Activated CD4-positive, alpha-beta memory T cell treated with anti-CD3 and anti-CD28 coated beads for 36 hours (primary cell): ENCODE measurements at regions of chr21 and their contacts with region 1.

Region 1: DNA sequence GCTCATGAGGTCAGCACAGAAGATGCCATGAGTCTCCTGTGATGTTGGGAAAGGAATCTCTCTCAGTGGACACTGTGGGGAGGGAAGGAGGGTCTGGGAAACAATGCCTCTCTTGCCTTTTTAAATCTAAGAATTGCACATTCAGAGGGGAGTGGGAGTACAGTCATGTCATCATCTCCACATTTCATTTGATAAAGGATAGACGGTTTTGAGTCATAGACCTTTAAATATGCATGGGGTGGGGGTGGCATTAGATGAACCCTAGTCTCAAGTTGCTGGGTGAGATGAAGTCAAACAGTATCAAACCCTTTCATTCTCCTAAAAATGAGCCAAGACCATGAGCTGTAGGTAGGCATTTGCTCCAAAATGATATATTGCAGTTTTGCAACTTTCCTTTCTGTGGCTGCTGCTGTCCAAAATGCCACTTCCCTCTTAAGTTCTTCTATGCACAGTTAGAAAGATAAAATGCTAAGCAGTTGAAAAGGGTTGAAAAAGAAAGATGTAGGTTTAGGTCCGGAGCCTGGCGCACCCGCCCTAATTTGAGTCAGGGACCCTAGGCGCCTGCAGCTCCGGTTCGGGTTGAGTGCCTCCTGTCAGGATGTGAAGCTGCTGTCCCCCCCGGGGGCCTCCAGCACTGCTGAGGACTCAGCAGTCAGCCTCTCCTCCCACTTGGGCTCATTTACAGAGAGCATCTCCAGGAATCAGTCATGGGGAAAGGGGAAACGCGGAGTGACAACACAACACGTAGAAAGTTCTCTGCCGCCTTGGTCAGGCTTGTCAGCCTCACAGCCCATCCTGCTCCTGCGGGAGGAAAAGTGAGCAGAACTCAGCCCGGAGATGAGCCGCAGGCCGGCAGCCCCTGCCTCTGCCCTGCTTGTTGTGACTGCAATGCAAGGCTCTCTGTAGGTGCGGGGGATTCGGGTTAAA is 479.3 kb upstream of the RUNX1 start:
- DNase-seq: peak; percentile 78
- H3K4me3 Mint-ChIP-seq: peak overlapping the region; percentile 80
- H3K27ac Mint-ChIP-seq: peak overlapping the region; percentile 84
- H3K4me1 Mint-ChIP-seq: peaks cover 48% of the 10 kb centered on the region
- H3K27me3 Mint-ChIP-seq: no peaks in the 10 kb centered on the region

Region 2: DNA sequence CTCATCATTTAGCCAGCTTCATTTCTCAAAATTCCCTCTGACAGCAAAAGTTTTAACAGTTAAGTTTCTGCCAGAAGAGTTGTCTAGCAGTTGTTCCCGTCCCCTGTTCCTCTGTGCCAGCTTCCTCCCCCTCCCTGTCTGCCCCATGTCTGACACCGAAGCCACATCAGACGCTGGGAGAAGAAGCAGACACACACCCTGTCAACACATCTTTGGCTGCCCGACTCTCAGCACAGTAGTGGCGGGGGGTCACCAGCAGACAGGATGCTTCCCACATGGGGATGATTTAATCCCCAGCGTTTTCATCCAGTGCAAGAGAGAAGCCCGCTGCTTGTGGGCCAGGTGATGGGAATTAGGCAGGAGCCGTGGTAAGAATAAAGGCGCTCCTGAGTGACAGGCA is 99.9 kb before region 1 on chr21:
- CTCF ChIA-PET with region 1: no interaction called
- POLR2A ChIA-PET with region 1: no interaction called
- intact Hi-C with region 1: loop called (anchors 2 kb)
- DNase-seq: peak; percentile 46
- H3K4me3 Mint-ChIP-seq: peak overlapping the region; percentile 46
- H3K27ac Mint-ChIP-seq: peak overlapping the region; percentile 56
- H3K4me1 Mint-ChIP-seq: peaks cover 34% of the 10 kb centered on the region
- H3K27me3 Mint-ChIP-seq: peaks cover 21% of the 10 kb centered on the region

Region 3: DNA sequence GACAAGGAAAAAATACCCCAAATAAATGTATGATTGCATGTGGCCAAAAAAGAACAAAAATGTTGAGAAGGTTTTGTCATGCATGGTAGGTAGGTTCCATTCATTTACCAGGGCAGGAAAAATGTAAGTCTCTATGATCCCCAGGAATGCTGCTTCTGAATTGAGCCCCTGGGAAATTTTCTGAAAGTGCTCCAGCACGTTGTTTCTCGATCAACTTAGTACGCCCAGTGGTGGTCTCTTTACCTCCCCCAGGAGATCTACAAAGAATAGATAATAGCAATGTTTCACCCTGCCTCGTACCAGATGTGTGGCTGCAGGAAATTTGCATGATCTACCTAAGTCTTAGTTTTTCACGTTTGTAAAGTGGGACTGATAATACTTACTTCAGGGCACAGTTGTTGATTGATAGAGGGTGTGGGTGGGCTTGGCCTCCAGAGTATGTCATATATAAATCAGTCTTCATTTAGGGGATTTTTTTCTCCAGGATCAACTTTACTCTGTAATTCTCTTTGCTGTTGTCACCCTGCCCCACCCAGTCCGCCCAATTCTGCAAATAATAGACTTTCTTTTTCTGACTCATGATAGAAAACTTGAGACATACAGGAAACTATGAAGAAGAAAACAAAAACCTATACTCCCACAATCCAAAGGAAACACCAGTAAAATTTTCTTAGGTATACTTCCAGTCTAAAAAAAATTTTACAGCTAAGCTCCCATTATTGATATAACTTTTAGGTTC is 17.3 kb before region 1 on chr21:
- CTCF ChIA-PET with region 1: no interaction called
- POLR2A ChIA-PET with region 1: no interaction called
- intact Hi-C with region 1: loop called (anchors 1 kb)
- DNase-seq: peak; percentile 40
- H3K4me3 Mint-ChIP-seq: no peak overlapping the region
- H3K27ac Mint-ChIP-seq: no peak overlapping the region
- H3K4me1 Mint-ChIP-seq: peaks cover 22% of the 10 kb centered on the region
- H3K27me3 Mint-ChIP-seq: peaks cover 8% of the 10 kb centered on the region

Region 4: DNA sequence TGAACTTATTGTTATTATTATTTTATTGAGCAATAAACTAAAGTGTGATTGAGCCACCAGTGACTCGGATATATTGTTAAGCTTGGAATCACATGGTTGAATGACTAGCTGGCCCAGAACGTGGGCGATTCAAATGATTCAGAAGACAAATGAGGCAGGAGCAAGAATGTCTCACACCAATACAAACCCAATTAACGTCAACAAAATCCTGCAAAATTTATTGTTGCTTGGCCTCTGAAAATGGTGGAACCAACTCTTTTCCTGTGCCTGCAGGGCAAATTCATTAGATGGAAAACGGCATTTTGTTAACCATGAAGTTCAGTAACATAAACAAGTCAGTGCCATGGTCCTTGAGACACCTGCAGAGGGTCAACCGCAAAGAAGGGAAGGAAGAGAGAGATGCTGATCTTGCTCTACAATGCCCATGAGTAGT is 50.0 kb after region 1 on chr21:
- CTCF ChIA-PET with region 1: no interaction called
- POLR2A ChIA-PET with region 1: no interaction called
- intact Hi-C with region 1: loop called (anchors 1 kb)
- DNase-seq: no peak
- H3K4me3 Mint-ChIP-seq: no peak overlapping the region
- H3K27ac Mint-ChIP-seq: peak overlapping the region; percentile 72
- H3K4me1 Mint-ChIP-seq: peaks cover 30% of the 10 kb centered on the region
- H3K27me3 Mint-ChIP-seq: peaks cover 17% of the 10 kb centered on the region

Region 5: DNA sequence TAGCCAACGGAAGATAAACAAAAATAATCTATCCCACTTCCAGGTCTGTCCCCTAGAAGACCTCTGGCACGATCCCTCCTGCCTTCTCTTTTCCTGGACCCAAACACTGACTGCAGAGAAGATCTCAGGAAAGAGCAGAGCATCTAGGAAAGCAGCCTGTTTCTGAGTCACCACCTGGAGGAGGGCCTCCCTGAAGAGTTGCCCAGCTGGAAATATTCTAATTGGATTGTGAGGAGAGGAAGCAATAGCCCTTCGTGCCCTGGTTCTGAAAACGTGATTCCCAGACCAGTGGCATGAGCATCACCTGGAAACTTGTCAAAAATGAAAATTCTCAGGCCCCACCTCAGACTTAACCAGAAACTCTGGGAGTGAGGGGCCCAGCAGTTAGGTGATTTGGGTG is 120.8 kb after region 1 on chr21:
- CTCF ChIA-PET with region 1: no interaction called
- POLR2A ChIA-PET with region 1: no interaction called
- intact Hi-C with region 1: no loop called
- DNase-seq: no peak
- H3K4me3 Mint-ChIP-seq: no peak overlapping the region
- H3K27ac Mint-ChIP-seq: no peak overlapping the region
- H3K4me1 Mint-ChIP-seq: no peaks in the 10 kb centered on the region
- H3K27me3 Mint-ChIP-seq: peaks cover 22% of the 10 kb centered on the region

Region 6: DNA sequence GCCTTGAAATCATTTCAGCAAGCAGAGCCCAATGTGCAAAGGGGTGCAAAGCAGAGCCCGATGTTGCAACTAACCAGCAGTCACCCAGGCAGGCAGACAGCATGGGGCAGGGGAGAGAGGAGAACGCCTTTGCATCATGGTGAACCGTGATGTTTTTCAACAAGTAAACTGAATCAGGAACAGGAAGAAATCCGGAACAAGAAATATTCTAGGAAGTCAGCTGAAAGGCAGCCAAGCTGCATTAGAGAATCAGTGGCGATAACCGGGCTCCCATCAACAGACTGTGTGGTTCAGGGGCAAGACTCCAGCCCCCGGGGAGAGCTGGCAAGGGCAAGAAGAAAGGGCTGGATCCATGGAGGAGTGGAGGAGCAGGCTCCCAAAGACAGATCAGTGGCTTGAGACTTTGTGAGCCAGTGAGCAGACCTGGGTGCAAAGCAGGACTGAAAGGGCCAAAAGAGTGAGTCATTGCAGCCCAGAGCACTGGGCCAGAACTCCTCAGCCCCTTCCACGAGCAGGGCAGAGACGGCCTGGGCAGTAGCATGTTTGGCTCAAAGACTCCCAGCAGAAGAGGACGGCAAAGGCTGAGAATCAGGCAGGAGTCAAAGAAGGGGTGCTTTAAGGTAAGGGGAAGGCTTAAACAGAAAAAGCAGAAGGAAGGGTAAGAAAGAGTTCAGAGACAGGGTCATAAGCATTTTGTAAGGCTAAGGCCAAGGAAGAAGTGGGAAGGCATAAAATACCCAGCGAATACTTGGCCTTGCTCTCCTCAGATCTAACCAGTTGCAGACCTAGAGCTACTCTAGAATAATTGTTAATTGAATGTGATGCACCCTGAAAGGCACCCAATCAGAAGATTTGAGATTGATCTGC is 376.9 kb after region 1 on chr21:
- CTCF ChIA-PET with region 1: no interaction called
- POLR2A ChIA-PET with region 1: no interaction called
- intact Hi-C with region 1: no loop called
- DNase-seq: no peak
- H3K4me3 Mint-ChIP-seq: no peak overlapping the region
- H3K27ac Mint-ChIP-seq: no peak overlapping the region
- H3K4me1 Mint-ChIP-seq: no peaks in the 10 kb centered on the region
- H3K27me3 Mint-ChIP-seq: no peaks in the 10 kb centered on the region

Region 7: GRCh38 chr21:35932232-35932911 is 404.0 kb after region 1 on chr21:
- CTCF ChIA-PET with region 1: no interaction called
- POLR2A ChIA-PET with region 1: no interaction called
- intact Hi-C with region 1: loop called (anchors 10 kb)
- DNase-seq: peak; percentile 59
- H3K4me3 Mint-ChIP-seq: no peak overlapping the region
- H3K27ac Mint-ChIP-seq: no peak overlapping the region
- H3K4me1 Mint-ChIP-seq: no peaks in the 10 kb centered on the region
- H3K27me3 Mint-ChIP-seq: no peaks in the 10 kb centered on the region